Vagina (tissue), 2 donors: ENCODE measurements at regions of chr19 and their contacts with region 1.

Region 1: DNA sequence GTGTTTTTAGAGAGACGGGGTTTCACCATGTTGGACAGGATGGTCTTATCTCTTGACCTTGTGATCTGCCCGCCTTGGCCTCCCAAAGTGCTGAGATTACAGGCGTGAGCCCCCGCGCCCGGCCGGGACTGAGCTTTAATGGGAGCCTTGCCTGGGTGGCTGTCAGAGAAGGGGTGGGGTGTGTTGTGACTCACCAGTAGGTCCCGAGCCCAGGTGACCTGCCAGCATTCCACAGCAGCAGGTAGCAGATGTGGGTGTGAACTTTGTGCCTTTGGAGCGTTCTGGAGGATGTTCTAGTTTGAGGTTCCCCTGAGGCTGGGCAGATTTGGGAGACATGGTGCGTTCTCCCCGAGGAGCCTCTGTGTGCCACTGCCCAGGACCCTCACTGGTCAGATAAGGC is 7.1 kb upstream of the EPN1 start:
- DNase-seq: no peak
- H3K4me3 ChIP-seq: no peak overlapping the region
- H3K27ac ChIP-seq: no peak overlapping the region
- H3K4me1 ChIP-seq: no peaks in the 10 kb centered on the region
- H3K27me3 ChIP-seq: no peaks in the 10 kb centered on the region
- CTCF ChIP-seq: no peak
- POLR2A ChIP-seq: no peak

Region 2: GRCh38 chr19:55117636-55118391 is 550.1 kb before region 1 on chr19 and contains the start of gene PPP1R12C:
- intact Hi-C with region 1: loop called (anchors 10 kb)
- DNase-seq: peak; percentile 98 to 99
- H3K4me3 ChIP-seq: peak within 1 kb of the TSS; percentile 85 to 94
- H3K27ac ChIP-seq: peak within 1 kb of the TSS; percentile 96
- H3K4me1 ChIP-seq: peaks cover 53% of the 10 kb centered on the region
- H3K27me3 ChIP-seq: no peaks in the 10 kb centered on the region
- CTCF ChIP-seq: no peak
- POLR2A ChIP-seq: no peak
- total RNA-seq, gene PPP1R12C: 108 TPM

Region 3: GRCh38 chr19:55738302-55738701 is 70.3 kb after region 1 on chr19 and contains the start of gene NLRP9:
- intact Hi-C with region 1: no loop called
- DNase-seq: no peak
- H3K4me3 ChIP-seq: no peak within 1 kb of the TSS
- H3K27ac ChIP-seq: no peak within 1 kb of the TSS
- H3K4me1 ChIP-seq: no peaks in the 10 kb centered on the region
- H3K27me3 ChIP-seq: no peaks in the 10 kb centered on the region
- CTCF ChIP-seq: no peak
- POLR2A ChIP-seq: no peak
- total RNA-seq, gene NLRP9: not detected